ENCODE measurements at regions of chr5 and their contacts with region 1.

Region 1: DNA sequence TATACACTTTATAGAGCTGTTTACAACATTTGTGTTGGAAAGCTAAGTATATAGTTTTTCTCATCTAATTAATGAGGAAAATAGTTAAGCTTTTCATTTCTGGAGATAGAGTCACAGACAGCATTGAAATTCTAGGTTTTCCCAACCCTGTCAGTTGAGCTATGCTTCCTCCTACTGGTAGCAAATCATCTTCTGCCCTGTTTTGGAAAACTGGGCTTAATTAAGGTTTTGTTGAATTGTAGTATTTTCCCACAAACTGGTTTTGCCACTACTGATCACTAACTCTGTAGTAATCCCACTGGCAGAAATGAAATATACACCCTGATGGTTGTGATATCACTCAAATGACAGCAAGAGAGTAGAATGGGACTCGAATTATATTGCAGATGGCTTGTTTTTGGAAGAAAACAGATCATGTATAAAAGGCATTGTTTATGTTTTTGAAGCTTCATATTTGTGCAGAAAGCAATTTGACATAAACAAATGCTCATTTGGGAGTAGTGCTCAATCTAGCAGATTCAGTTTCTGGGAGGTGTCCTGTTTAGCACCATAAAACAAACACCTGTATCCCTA is 46.6 kb downstream of the CD180 start:
- DNase-seq: no peak
- ATAC-seq: peak; percentile 31 to 49 (median 36)
- H3K4me3 ChIP-seq: no peak overlapping the region
- H3K27ac ChIP-seq: no peak overlapping the region
- H3K4me1 ChIP-seq: peaks cover 0 to 9% (median under 1%) of the 10 kb centered on the region in 4 donors
- H3K27me3 ChIP-seq: no peaks in the 10 kb centered on the region
- CTCF ChIP-seq: peak; percentile 36 to 48 (median 40)
- POLR2A ChIP-seq: no peak

Region 2: GRCh38 chr5:66661149-66661548 is 488.9 kb before region 1 on chr5:
- intact Hi-C with region 1: no loop called
- DNase-seq: no peak
- ATAC-seq: peak; percentile 30 to 60 (median 44)
- H3K4me3 ChIP-seq: no peak overlapping the region
- H3K27ac ChIP-seq: no peak overlapping the region
- H3K4me1 ChIP-seq: peaks cover 0 to 10% (median 0%) of the 10 kb centered on the region in 4 donors
- H3K27me3 ChIP-seq: no peaks in the 10 kb centered on the region
- CTCF ChIP-seq: no peak
- POLR2A ChIP-seq: no peak

Region 3: DNA sequence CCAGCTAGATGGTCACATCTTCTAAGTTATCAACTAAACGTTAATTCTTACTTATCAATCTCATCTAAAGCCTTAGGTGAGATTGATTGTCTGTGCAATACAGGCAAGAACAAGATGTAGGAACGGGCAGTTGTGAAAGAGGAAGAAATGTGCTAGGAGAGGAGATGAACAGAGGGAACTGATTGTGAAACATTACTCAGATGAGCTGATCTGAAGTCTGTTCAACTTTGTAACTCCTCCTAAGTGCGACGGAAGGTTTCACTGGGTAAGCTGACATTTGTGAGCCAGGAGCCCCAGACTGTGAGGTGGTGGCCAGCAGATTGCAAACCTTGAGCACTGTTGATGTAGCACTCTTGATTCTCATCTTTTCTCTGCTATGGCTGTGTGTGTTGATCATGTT is 157.5 kb before region 1 on chr5:
- intact Hi-C with region 1: loop called in 1 of 2 experiments (anchors 10 kb)
- DNase-seq: no peak
- ATAC-seq: peak; percentile 48 to 71 (median 61)
- H3K4me3 ChIP-seq: no peak overlapping the region
- H3K27ac ChIP-seq: no peak overlapping the region
- H3K4me1 ChIP-seq: peaks cover 0 to 8% (median 3%) of the 10 kb centered on the region in 4 donors
- H3K27me3 ChIP-seq: no peaks in the 10 kb centered on the region
- CTCF ChIP-seq: no peak
- POLR2A ChIP-seq: no peak

Region 4: GRCh38 chr5:67255881-67256280 is 105.8 kb after region 1 on chr5:
- intact Hi-C with region 1: no loop called
- DNase-seq: no peak
- ATAC-seq: peak in 1 of 4 donors; percentile 14
- H3K4me3 ChIP-seq: no peak overlapping the region
- H3K27ac ChIP-seq: no peak overlapping the region
- H3K4me1 ChIP-seq: no peaks in the 10 kb centered on the region
- H3K27me3 ChIP-seq: no peaks in the 10 kb centered on the region
- CTCF ChIP-seq: no peak
- POLR2A ChIP-seq: no peak